Activated CD4-positive, alpha-beta memory T cell treated with anti-CD3 and anti-CD28 coated beads for 36 hours (primary cell): ENCODE measurements at regions of chr7 and their contacts with region 1.

Region 1: DNA sequence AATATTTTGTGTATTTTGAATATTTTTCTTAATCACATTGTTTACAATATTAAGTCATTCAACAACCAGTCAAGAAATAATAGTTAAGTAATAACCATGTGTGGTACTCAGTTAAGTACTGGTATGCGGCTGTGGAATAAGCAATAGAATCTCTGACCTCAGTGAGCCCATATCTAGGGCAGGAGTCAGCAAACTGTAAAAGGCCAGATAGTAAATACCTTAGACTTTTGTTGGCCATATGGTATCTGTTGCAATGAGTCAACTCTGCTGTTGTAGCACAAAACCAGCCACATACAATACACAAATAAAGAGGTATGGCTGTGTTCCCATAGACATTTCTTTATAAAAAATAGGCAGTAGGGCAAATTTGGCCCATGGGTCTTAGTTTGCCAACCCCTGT is 311.6 kb upstream of the SEMA3A start:
- DNase-seq: no peak
- H3K4me3 Mint-ChIP-seq: no peak overlapping the region
- H3K27ac Mint-ChIP-seq: no peak overlapping the region
- H3K4me1 Mint-ChIP-seq: no peaks in the 10 kb centered on the region
- H3K27me3 Mint-ChIP-seq: no peaks in the 10 kb centered on the region

Region 2: GRCh38 chr7:84455788-84456187 is 50.4 kb before region 1 on chr7:
- CTCF ChIA-PET with region 1: no interaction called
- POLR2A ChIA-PET with region 1: no interaction called
- intact Hi-C with region 1: loop called (anchors 5 kb)
- DNase-seq: no peak
- H3K4me3 Mint-ChIP-seq: no peak overlapping the region
- H3K27ac Mint-ChIP-seq: no peak overlapping the region
- H3K4me1 Mint-ChIP-seq: no peaks in the 10 kb centered on the region
- H3K27me3 Mint-ChIP-seq: no peaks in the 10 kb centered on the region

Region 3: GRCh38 chr7:84799106-84799505 is 293.0 kb after region 1 on chr7:
- CTCF ChIA-PET with region 1: no interaction called
- POLR2A ChIA-PET with region 1: no interaction called
- intact Hi-C with region 1: no loop called
- DNase-seq: no peak
- H3K4me3 Mint-ChIP-seq: no peak overlapping the region
- H3K27ac Mint-ChIP-seq: no peak overlapping the region
- H3K4me1 Mint-ChIP-seq: no peaks in the 10 kb centered on the region
- H3K27me3 Mint-ChIP-seq: no peaks in the 10 kb centered on the region